ENCODE measurements at regions of chr5 and their contacts with region 1.

Region 1: GRCh38 chr5:78799266-78800017 is 150.9 kb upstream of the LHFPL2 start:
- DNase-seq: peak; percentile 67
- ATAC-seq: peak; percentile 83
- H3K4me3 ChIP-seq: no peak overlapping the region
- H3K27ac ChIP-seq: no peak overlapping the region
- H3K4me1 ChIP-seq: peaks cover 14% of the 10 kb centered on the region
- H3K27me3 ChIP-seq: no peaks in the 10 kb centered on the region
- CTCF ChIP-seq: 0 out of 2 replicates have a peak, but pooled peaks have one; percentile 14
- POLR2A ChIP-seq: no peak
- RAD21 ChIP-seq: 0 out of 2 replicates have a peak, but pooled peaks have one; percentile 12

Region 2: GRCh38 chr5:78638423-78638822 is 161.0 kb before region 1 on chr5:
- CTCF ChIA-PET with region 1: no interaction called
- POLR2A ChIA-PET with region 1: no interaction called
- dilution Hi-C with region 1: no loop called
- in situ Hi-C with region 1: no loop called
- intact Hi-C with region 1: loop called (anchors 2 kb)
- DNase-seq: peak; percentile 92
- ATAC-seq: peak; percentile 76
- H3K4me3 ChIP-seq: no peak overlapping the region
- H3K27ac ChIP-seq: peak overlapping the region; percentile 2; the same call in 1 of the 2 replicates
- H3K4me1 ChIP-seq: peaks cover 36% of the 10 kb centered on the region
- H3K27me3 ChIP-seq: no peaks in the 10 kb centered on the region
- CTCF ChIP-seq: no peak
- POLR2A ChIP-seq: 0 out of 2 replicates have a peak, but pooled peaks have one; percentile 20
- RAD21 ChIP-seq: no peak; the same call in 1 of the 2 replicates

Region 3: DNA sequence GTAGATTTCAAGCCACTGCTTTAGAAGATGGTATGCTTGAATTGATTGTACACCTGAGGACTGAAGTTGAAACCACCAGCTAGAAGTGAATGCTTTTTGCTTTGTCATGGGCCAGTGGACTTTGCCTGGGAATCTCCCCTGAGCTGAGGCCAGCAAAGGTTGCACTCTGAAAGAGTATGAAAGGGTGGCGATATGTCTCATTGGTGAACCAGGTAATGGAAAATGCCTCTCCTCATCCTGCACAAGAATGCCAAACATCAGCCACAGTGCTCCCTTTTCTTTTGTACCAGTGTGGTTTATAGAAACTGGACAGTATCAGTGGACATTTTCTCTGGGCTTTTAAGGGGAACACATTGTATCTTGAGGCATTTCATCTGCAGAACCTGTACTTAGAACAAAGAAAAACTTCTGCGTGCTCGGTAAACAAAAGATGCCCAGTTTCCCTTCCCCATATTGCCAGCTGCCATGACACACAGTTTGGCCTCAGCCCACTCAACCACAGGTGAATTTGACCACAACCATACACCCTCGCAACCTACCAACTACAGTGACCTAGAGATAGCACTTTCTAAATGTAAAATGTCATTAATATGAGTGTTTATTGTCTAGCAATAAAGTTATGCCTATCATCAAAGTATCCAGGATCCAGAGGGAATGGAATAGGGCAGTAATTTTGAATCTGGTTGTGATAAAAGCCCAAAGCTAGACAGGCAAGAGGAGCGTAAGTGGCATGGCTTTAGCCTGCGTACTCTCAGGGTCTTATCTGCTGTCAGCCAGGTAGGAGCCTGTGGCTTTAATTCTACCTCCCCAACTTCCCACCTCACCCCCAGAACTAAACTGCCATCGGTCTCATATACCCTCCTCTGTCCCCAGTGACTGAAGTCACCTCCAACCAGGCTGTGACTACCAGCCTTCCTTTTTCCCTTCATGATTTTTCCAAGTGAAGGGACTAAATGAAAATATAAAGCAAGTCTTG is 71.4 kb before region 1 on chr5:
- CTCF ChIA-PET with region 1: no interaction called
- POLR2A ChIA-PET with region 1: no interaction called
- dilution Hi-C with region 1: no loop called
- in situ Hi-C with region 1: no loop called
- intact Hi-C with region 1: no loop called
- DNase-seq: no peak
- ATAC-seq: no peak
- H3K4me3 ChIP-seq: no peak overlapping the region
- H3K27ac ChIP-seq: no peak overlapping the region
- H3K4me1 ChIP-seq: peaks cover 4% of the 10 kb centered on the region; the same call in 1 of the 2 replicates
- H3K27me3 ChIP-seq: no peaks in the 10 kb centered on the region
- CTCF ChIP-seq: no peak
- POLR2A ChIP-seq: no peak
- RAD21 ChIP-seq: no peak

Measured in IMR-90 (cell line).